GM12878 (cell line): ENCODE measurements at regions of chr1 and their contacts with region 1.

Region 1: DNA sequence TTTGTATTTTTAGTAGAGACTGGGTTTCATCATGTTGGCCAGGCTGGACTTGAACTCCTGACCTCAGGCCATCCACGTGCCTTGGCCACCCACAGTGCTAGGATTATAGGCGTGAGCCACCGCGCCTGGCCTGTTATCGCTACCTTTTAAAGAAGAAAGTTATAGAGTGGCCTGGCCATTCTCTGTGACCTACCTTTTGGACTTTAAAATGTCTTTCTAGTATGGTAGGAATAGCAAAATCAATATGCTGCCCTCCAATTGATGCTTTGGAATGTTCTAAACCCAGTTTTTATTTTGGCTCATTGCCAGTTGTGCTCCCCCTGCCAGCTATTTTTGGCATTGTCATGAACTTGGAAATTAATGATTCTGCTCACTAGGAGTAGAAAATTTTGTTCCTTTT is 19.9 kb downstream of the HIPK1 start:
- DNase-seq: no peak
- ATAC-seq: no peak
- H3K4me3 ChIP-seq: no peak overlapping the region
- H3K27ac ChIP-seq: no peak overlapping the region
- H3K4me1 ChIP-seq: peaks cover 24% of the 10 kb centered on the region
- H3K27me3 ChIP-seq: no peaks in the 10 kb centered on the region
- CTCF ChIP-seq: 0 out of 6 replicates have a peak, but pooled peaks of 1 of the 3 experiments have one; percentile 10
- EP300 ChIP-seq: no peak
- POLR2A ChIP-seq: no peak
- RAD21 ChIP-seq: no peak

Region 2: GRCh38 chr1:113684153-113684541 is 264.9 kb before region 1 on chr1:
- CTCF ChIA-PET with region 1: no interaction called
- POLR2A ChIA-PET with region 1: no interaction called
- RAD21 ChIA-PET with region 1: no interaction called
- SMC1A ChIA-PET with region 1: no interaction called
- in situ Hi-C with region 1: no loop called
- intact Hi-C with region 1: no loop called
- DNase-seq: no peak
- ATAC-seq: no peak
- H3K4me3 ChIP-seq: no peak overlapping the region
- H3K27ac ChIP-seq: no peak overlapping the region
- H3K4me1 ChIP-seq: no peaks in the 10 kb centered on the region
- H3K27me3 ChIP-seq: no peaks in the 10 kb centered on the region
- CTCF ChIP-seq: no peak
- EP300 ChIP-seq: no peak
- POLR2A ChIP-seq: no peak
- RAD21 ChIP-seq: no peak

Region 3: DNA sequence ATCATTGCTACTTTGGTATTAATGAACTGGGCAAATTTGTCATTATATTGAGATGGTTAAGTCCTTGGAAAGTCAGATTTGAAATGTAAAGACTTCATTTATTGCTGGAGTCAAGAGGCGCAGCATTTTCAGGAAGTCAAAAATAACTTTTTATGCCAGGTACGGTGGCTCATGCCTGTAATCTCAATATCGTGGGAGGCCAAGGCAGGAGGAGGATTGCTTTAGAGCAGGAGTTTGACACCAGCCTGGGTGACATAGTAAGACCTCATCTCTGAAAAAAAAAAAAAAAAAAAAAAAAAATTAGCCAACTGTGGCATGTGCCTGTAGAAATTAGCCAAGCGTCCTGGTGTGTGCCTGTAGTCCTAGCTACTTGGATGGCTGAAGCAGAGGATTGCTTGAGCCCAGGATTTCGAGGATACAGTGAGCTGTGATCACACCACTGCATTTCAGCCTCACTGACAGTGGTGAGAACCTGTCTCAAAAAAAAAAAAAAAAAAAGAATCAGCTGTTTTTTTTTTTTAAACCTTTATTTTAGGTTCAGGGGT is 14.4 kb before region 1 on chr1:
- CTCF ChIA-PET with region 1: interaction called, 19 read pairs
- POLR2A ChIA-PET with region 1: interaction called, 34 read pairs
- RAD21 ChIA-PET with region 1: interaction called, 27 read pairs
- SMC1A ChIA-PET with region 1: interaction called, 99 read pairs
- in situ Hi-C with region 1: no loop called
- intact Hi-C with region 1: no loop called
- DNase-seq: no peak
- ATAC-seq: no peak
- H3K4me3 ChIP-seq: no peak overlapping the region
- H3K27ac ChIP-seq: no peak overlapping the region
- H3K4me1 ChIP-seq: 0 out of 2 replicates have a peak, but pooled peaks cover 2% of the 10 kb centered on the region
- H3K27me3 ChIP-seq: no peaks in the 10 kb centered on the region
- CTCF ChIP-seq: no peak
- EP300 ChIP-seq: no peak
- POLR2A ChIP-seq: no peak
- RAD21 ChIP-seq: no peak

Region 4: GRCh38 chr1:113963281-113963906 is 14.4 kb after region 1 on chr1:
- CTCF ChIA-PET with region 1: interaction called, 4 read pairs
- POLR2A ChIA-PET with region 1: interaction called, 3 read pairs
- RAD21 ChIA-PET with region 1: interaction called, 4 read pairs
- SMC1A ChIA-PET with region 1: interaction called, 18 read pairs
- in situ Hi-C with region 1: no loop called
- intact Hi-C with region 1: no loop called
- DNase-seq: no peak
- ATAC-seq: no peak
- H3K4me3 ChIP-seq: no peak overlapping the region
- H3K27ac ChIP-seq: no peak overlapping the region
- H3K4me1 ChIP-seq: no peaks in the 10 kb centered on the region
- H3K27me3 ChIP-seq: no peaks in the 10 kb centered on the region
- CTCF ChIP-seq: peak in 1 of 3 experiments; percentile 31; a peak in 2 of 6 replicates
- EP300 ChIP-seq: no peak
- POLR2A ChIP-seq: no peak
- RAD21 ChIP-seq: peak; percentile 36; the same call in 1 of the 2 replicates

Region 5: DNA sequence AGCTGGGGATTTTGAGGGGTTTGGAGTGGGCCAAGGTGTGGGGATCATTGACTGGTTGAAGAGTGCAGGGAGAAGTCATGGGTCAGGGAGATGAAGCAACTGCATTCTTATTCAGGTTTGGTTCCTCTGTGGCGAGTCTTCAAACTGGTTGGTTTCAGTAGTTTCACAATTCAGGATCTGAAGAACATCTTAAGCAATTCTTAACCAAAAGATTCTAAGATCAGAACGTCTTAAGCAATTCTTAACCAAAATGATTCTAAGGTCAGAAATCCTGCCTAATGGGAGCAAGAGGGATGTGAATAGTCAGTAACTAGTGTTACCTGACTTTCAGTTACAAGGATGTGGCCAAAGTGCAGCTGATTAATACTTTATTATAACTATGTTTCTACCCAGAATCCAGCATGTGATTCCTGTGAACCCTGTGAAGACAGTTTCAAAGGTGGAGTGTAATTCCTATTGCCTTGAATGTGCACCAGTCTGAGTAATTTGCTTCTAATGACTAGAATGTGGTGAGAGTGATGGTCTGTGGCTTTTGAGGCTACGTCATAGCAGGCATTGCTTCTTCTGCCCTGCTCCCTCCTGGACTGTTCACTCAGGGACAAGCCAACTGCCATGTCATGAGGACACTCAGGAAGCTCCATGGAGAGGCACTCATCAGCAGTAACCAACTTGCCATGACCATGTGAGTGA is 91.5 kb after region 1 on chr1:
- CTCF ChIA-PET with region 1: no interaction called
- POLR2A ChIA-PET with region 1: no interaction called
- RAD21 ChIA-PET with region 1: no interaction called
- SMC1A ChIA-PET with region 1: no interaction called
- in situ Hi-C with region 1: no loop called
- intact Hi-C with region 1: no loop called
- DNase-seq: no peak
- ATAC-seq: no peak
- H3K4me3 ChIP-seq: no peak overlapping the region
- H3K27ac ChIP-seq: no peak overlapping the region
- H3K4me1 ChIP-seq: no peaks in the 10 kb centered on the region
- H3K27me3 ChIP-seq: peaks cover 0 to 3% of the 10 kb centered on the region in 2 experiments; a peak in 2 of 4 replicates
- CTCF ChIP-seq: no peak
- EP300 ChIP-seq: no peak
- POLR2A ChIP-seq: no peak
- RAD21 ChIP-seq: no peak

Region 6: DNA sequence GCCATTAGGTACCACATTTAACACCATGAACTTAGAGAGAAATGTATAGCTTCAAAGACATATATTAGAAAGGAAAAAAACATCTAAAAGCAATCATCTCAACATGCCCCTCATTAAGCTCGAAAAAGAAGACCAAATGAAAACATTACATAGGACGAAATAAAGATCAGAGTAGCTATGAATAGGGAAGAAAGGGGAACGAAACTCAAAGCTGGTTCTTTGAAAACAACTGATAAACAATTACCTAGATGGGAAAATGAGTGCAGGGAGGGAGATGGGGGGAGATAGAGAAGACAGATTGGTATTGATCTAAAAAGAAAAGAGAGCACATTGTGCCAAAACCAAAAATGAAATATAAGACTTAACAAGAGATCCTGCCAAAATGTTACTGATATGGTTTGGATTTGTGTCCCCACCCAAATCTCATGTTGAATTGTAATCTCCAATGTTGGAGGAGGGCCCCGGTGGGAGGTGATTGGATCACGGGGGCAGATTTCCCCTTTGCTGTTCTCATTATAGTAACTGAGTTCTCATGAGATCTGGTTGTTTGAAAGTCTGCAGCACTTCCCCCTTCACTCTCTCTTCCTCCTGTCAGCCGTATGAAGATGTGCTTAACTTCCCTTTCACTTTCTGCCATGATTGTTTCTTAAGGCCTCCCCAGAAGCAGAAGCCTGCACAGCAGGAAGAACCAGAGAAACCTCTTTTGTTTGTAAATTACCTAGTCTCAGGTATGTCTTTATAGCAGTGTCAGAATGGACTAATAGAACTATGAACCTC is 533.4 kb after region 1 on chr1:
- CTCF ChIA-PET with region 1: no interaction called
- POLR2A ChIA-PET with region 1: no interaction called
- RAD21 ChIA-PET with region 1: no interaction called
- SMC1A ChIA-PET with region 1: no interaction called
- in situ Hi-C with region 1: no loop called
- intact Hi-C with region 1: no loop called
- DNase-seq: no peak
- ATAC-seq: peak; percentile 93
- H3K4me3 ChIP-seq: no peak overlapping the region
- H3K27ac ChIP-seq: peak overlapping the region; percentile 14; the same call in 1 of the 2 replicates
- H3K4me1 ChIP-seq: no peaks in the 10 kb centered on the region; the same call in 1 of the 2 replicates
- H3K27me3 ChIP-seq: no peaks in the 10 kb centered on the region
- CTCF ChIP-seq: no peak
- EP300 ChIP-seq: no peak
- POLR2A ChIP-seq: no peak
- RAD21 ChIP-seq: no peak